Caco-2 (cell line): ENCODE measurements at regions of chr6 and their contacts with region 1.

Region 1: GRCh38 chr6:138550346-138550767 is 51.1 kb upstream of the NHSL1 start:
- DNase-seq: peak; percentile 64 to 72
- H3K4me3 ChIP-seq: no peak overlapping the region
- H3K4me3 Mint-ChIP-seq: peak overlapping the region; percentile 46
- H3K27ac Mint-ChIP-seq: peak overlapping the region; percentile 99
- H3K4me1 ChIP-seq: peaks cover 83% of the 10 kb centered on the region
- H3K4me1 Mint-ChIP-seq: peaks cover 63% of the 10 kb centered on the region
- H3K27me3 ChIP-seq: no peaks in the 10 kb centered on the region
- H3K27me3 Mint-ChIP-seq: no peaks in the 10 kb centered on the region
- CTCF ChIP-seq: no peak

Region 2: DNA sequence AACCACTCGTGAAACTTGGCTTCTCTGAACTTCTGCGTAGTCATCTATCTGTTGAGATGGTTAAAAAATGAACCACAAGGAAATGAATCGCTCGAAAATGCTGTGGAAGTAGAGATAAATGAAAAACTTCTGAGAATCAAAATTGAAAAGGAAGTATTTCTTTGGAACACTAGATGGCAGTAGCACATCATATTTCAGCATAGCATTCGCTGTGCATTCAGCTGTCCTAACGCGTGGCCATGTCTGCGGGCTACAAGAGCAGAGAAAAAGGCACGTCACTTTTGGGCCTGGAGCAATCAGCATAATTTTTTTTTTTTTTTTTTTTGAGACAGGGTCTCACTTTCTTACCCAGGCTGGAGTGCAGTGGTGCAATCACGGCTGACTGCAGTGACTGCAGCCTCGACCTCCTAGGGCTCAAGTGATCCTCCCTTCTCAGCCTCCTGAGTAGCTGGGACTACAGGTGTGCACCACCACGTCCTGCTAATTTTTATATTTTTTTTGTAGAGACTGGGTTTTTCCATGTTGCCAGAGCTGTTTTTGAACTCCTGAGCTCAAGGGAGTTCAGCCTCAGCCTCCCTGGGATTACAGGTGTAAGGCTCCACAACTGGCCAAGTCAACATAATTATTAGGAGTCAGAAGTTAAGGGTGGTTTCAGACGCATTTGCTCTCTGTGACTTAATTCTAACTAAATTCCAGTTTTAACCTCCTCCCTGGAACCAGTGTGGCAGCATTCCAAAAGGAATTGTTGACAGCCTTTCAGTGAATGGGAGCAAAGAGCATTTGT is 434.3 kb before region 1 on chr6:
- CTCF ChIA-PET with region 1: no interaction called
- POLR2A ChIA-PET with region 1: no interaction called
- intact Hi-C with region 1: no loop called
- DNase-seq: peak; percentile 67 to 73
- H3K4me3 ChIP-seq: no peak overlapping the region
- H3K4me3 Mint-ChIP-seq: no peak overlapping the region
- H3K27ac Mint-ChIP-seq: peak overlapping the region; percentile 1
- H3K4me1 ChIP-seq: peaks cover 13% of the 10 kb centered on the region; the same call in 1 of the 2 replicates
- H3K4me1 Mint-ChIP-seq: peaks cover 7% of the 10 kb centered on the region
- H3K27me3 ChIP-seq: no peaks in the 10 kb centered on the region
- H3K27me3 Mint-ChIP-seq: no peaks in the 10 kb centered on the region
- CTCF ChIP-seq: peak; percentile 55 to 58

Region 3: GRCh38 chr6:138428944-138429598 is 121.3 kb before region 1 on chr6:
- CTCF ChIA-PET with region 1: no interaction called
- POLR2A ChIA-PET with region 1: no interaction called
- intact Hi-C with region 1: no loop called
- DNase-seq: peak in 1 of 2 experiments; percentile 45
- H3K4me3 ChIP-seq: no peak overlapping the region
- H3K4me3 Mint-ChIP-seq: no peak overlapping the region
- H3K27ac Mint-ChIP-seq: no peak overlapping the region
- H3K4me1 ChIP-seq: no peaks in the 10 kb centered on the region
- H3K4me1 Mint-ChIP-seq: peaks cover 5% of the 10 kb centered on the region
- H3K27me3 ChIP-seq: no peaks in the 10 kb centered on the region
- H3K27me3 Mint-ChIP-seq: no peaks in the 10 kb centered on the region
- CTCF ChIP-seq: peak; percentile 59 to 65

Region 4: DNA sequence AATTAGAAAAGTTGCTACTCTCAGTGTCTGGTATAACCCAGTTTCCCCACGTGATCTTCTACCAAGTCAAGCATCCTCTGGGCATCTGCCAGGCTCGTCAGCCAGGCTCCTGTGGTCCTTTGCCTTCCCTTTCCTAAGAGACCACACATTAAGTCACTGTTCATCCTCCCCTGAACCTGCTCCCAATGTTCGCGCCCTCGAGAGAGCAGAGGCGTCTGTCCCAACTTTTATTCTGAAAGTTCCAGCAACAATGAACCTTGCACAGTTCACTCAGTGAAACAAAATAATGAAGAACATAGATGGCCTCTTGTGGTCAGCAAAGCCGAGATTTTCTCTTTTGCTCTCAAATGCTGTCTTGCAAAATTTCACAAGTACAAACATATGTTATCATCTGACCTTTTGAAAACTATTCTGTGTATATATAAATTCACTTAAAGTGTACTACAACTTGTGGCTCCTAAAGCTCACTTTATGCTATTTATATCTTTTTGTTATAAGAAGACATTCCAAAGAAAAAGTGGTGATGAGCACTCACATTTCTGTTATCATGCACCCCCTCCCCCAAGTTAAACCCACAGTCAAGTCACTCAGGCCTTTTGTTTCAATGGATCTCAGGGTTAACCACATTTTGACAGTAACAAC is 11.8 kb before region 1 on chr6:
- CTCF ChIA-PET with region 1: no interaction called
- POLR2A ChIA-PET with region 1: no interaction called
- intact Hi-C with region 1: loop called (anchors 1 kb)
- DNase-seq: no peak
- H3K4me3 ChIP-seq: no peak overlapping the region
- H3K4me3 Mint-ChIP-seq: no peak overlapping the region
- H3K27ac Mint-ChIP-seq: peak overlapping the region; percentile 76
- H3K4me1 ChIP-seq: peaks cover 85% of the 10 kb centered on the region
- H3K4me1 Mint-ChIP-seq: peaks cover 50% of the 10 kb centered on the region
- H3K27me3 ChIP-seq: no peaks in the 10 kb centered on the region
- H3K27me3 Mint-ChIP-seq: no peaks in the 10 kb centered on the region
- CTCF ChIP-seq: no peak